ENCODE measurements at regions of chr7 and their contacts with region 1.

Region 1: DNA sequence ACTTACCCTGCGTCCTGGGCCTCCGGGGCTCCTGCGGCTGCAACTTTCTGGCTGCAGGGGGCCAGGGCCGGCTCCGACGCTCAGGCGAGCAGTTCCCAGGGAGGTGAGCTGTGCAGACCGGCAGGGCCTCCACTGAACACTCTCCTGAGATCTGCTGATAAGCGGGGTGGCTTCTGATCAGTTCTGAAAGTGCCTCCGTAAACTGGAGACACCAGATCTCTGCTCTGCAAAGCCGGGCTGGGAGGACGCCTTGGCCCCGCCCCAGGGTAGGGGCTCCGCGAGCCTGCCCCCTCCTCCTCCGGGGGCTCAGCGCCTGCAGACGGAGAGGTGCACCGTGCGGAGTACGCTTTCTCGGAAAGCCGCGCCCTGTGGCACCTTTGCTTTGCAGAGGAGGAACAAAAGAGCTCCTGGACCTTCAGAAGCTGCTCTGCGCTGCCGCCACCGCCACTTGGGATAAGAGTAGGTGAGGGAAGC is 141.3 kb upstream of the VKORC1L1 start:
- DNase-seq: no peak
- ATAC-seq: peak; percentile 68
- H3K4me3 ChIP-seq: no peak overlapping the region
- H3K27ac ChIP-seq: no peak overlapping the region
- H3K4me1 ChIP-seq: no peaks in the 10 kb centered on the region
- H3K27me3 ChIP-seq: no peaks in the 10 kb centered on the region
- CTCF ChIP-seq: no peak
- EP300 ChIP-seq: no peak
- POLR2A ChIP-seq: no peak
- RAD21 ChIP-seq: no peak

Region 2: DNA sequence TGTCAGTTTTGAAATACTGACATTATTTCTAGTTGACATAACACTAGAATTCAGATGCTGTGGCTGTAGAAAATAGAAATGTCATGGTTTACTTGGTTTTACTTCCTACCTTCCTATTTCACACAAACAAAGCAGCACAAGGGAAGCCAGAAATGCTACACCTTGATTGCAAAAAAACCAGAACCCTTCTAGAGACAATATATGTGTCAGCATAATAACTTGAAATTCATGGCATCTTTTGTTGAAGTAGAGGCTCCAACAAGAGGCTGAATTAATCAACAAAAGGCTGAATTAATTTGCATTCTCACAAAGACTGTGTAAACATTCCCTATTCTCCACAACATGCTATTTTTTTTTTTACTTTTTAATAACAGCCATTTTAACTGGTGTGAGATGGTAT is 766.0 kb before region 1 on chr7:
- CTCF ChIA-PET with region 1: no interaction called
- POLR2A ChIA-PET with region 1: no interaction called
- in situ Hi-C with region 1: no loop called
- intact Hi-C with region 1: no loop called
- DNase-seq: no peak
- ATAC-seq: no peak
- H3K4me3 ChIP-seq: no peak overlapping the region
- H3K27ac ChIP-seq: no peak overlapping the region
- H3K4me1 ChIP-seq: 0 out of 2 replicates have a peak, but pooled peaks cover 6% of the 10 kb centered on the region
- H3K27me3 ChIP-seq: 0 out of 5 replicates have a peak, but pooled peaks cover 0 to 1% of the 10 kb centered on the region in 2 experiments
- CTCF ChIP-seq: no peak
- EP300 ChIP-seq: no peak
- POLR2A ChIP-seq: no peak
- RAD21 ChIP-seq: no peak

Region 3: DNA sequence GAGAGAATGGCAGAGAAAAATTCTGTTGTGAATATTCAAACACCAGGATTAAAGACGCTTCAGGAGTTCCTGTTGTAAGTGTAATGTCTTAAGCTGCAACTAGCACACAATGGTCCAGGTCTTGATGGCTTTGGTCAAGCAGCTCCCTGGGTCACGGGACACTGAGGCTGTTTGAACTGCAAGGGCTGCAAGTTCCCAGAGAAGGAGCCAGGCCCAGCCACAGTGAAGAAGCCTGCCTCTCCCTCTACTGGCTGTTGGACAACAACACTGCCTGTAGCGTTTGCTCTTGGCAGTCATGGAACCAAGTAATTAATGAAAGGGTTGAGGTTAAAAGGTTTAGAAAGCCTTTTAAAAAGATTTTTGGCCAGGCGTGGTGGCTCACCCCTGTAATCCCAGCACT is 282.3 kb after region 1 on chr7:
- CTCF ChIA-PET with region 1: no interaction called
- POLR2A ChIA-PET with region 1: no interaction called
- in situ Hi-C with region 1: loop called (anchors 25 kb)
- intact Hi-C with region 1: no loop called
- DNase-seq: peak; percentile 65
- ATAC-seq: peak; percentile 97
- H3K4me3 ChIP-seq: no peak overlapping the region
- H3K27ac ChIP-seq: no peak overlapping the region
- H3K4me1 ChIP-seq: peaks cover 39% of the 10 kb centered on the region
- H3K27me3 ChIP-seq: no peaks in the 10 kb centered on the region
- CTCF ChIP-seq: peak; percentile 85
- EP300 ChIP-seq: no peak
- POLR2A ChIP-seq: no peak
- RAD21 ChIP-seq: peak; percentile 83